ENCODE measurements at regions of chr9 and their contacts with region 1.

Region 1: DNA sequence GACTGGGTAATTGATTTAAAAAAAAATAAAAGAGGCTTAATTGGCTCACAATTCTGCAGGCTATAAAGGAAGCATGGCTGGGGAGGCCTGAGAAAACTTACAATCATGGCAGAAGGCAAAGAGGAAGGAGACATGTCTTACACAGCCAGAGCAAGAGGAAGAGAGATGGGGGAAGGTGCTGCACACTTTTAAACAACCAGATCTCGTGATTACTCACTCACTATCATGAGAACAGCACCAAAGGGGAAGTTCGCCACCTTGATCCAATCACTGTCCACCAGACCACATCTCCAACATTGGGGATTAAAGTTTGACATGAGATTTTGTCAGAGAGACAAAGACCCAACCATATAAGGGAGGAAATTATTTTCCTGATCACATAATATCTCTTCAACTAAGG is 138.8 kb upstream of the NR4A3 start:
- DNase-seq: no peak
- H3K4me3 ChIP-seq: no peak overlapping the region
- H3K27ac ChIP-seq: no peak overlapping the region
- H3K4me1 ChIP-seq: no peaks in the 10 kb centered on the region
- H3K27me3 ChIP-seq: no peaks in the 10 kb centered on the region
- CTCF ChIP-seq: no peak
- POLR2A ChIP-seq: no peak

Region 2: GRCh38 chr9:99693888-99694287 is 11.0 kb after region 1 on chr9:
- intact Hi-C with region 1: loop called (anchors 2 kb)
- DNase-seq: no peak
- H3K4me3 ChIP-seq: no peak overlapping the region
- H3K27ac ChIP-seq: no peak overlapping the region
- H3K4me1 ChIP-seq: no peaks in the 10 kb centered on the region
- H3K27me3 ChIP-seq: no peaks in the 10 kb centered on the region
- CTCF ChIP-seq: no peak
- POLR2A ChIP-seq: no peak